H1 (cell line): ENCODE measurements at regions of chr10 and their contacts with region 1.

Region 1: DNA sequence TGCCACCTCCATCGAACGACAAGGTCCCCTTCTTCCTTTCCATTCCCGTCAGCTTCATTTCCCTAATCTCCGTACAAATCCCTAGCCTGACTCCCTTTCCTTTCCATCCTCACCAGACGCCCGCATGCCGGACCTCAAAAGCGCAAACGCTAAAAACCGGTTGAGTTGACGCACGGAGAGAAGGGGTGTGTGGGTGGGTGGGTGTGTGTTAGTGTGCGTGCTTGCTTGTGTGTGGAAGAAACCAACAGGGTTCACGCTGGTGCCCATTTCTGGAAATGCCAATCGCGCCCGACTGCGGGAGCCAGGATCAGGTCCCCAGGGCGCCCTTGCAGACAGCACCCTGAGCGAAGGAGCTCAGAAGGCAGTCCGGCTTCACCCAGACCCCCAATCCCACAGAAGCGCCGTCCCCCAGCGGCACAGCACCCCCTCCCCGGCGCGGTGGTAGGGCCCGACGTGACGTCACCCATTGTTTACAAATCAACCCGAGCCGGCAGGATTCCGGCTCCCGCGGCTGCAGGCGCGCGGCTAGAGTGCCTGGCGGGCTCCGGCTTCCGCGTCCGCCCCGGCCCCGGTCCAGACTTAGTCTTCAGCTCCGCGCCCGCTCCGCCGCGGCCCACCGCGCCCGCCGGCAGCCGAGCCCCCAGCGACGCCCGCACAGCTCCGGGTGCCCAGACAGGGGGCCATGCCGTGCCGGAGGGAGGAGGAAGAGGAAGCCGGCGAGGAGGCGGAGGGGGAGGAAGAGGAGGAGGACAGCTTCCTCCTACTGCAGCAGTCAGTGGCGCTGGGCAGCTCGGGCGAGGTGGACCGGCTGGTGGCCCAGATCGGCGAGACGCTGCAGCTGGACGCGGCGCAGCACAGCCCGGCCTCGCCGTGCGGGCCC is at the start of gene FRAT1:
- DNase-seq: peak; percentile 65 to 95
- H3K4me3 ChIP-seq: peak within 1 kb of the TSS; percentile 45 to 79 (median 70)
- H3K27ac ChIP-seq: peak within 1 kb of the TSS; percentile 100
- H3K4me1 ChIP-seq: peaks cover 0 to 15% (median 12%) of the 10 kb centered on the region in 4 experiments; a peak in 6 of 7 replicates
- H3K27me3 ChIP-seq: peaks cover 6 to 23% (median 20%) of the 10 kb centered on the region in 4 experiments
- CTCF ChIP-seq: no peak
- EP300 ChIP-seq: peak in 1 of 2 experiments; percentile 97; a peak in 2 of 3 replicates
- POLR2A ChIP-seq: peak in 1 of 2 experiments; percentile 50; a peak in 1 of 3 replicates
- RAD21 ChIP-seq: no peak
- total RNA-seq, gene FRAT1: 4.8 and 5.2 TPM in 2 replicates

Region 2: GRCh38 chr10:97185326-97186058 is 133.5 kb before region 1 on chr10 and contains the start of gene SLIT1:
- CTCF ChIA-PET with region 1: no interaction called
- POLR2A ChIA-PET with region 1: no interaction called
- DNase-seq: peak in 1 of 2 experiments; percentile 75
- H3K4me3 ChIP-seq: peak within 1 kb of the TSS; percentile 44 to 70 (median 62)
- H3K27ac ChIP-seq: no peak within 1 kb of the TSS
- H3K4me1 ChIP-seq: peaks cover 0 to 22% (median 11%) of the 10 kb centered on the region in 4 experiments; a peak in 6 of 7 replicates
- H3K27me3 ChIP-seq: peaks cover 27 to 60% (median 51%) of the 10 kb centered on the region in 4 experiments
- CTCF ChIP-seq: no peak
- EP300 ChIP-seq: no peak
- POLR2A ChIP-seq: no peak
- RAD21 ChIP-seq: no peak
- total RNA-seq, gene SLIT1: 0.88 and 1.2 TPM in 2 replicates

Region 3: DNA sequence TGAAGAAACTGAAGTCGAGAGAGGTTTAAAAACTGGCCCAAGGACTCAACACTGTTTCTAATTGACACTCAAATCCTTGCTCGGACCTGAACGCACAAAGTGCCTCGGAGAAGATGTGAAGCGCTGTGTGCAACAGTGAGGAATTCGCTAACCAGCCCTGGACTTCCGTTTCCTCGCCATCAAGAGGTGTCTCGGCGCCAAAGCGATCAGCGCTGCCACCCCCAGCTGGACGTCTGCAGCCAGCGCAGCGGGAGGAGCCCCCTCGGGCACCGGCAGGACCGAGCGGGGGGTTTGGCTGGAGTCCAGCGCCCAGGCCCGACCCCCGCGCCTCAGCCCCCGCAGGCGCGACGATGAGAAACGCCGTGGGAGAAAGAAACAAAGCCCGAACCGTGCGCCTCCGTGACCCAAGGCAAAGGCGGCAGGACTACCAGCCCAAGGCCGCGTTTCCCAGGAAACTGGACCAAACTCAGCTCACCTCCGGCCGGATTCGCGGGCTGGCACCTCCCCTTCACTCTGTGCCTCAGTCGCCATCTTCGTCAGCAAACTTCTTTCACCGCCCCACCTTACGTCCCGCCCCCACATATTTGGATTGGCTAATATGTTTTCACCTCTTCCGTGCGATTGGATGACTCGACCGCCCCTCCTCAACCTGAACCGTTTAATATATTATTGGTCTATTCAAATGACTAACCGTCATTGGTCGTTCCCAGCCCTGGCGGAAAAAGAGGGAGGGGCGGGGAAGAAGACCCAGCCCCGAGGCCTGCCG is 26.7 kb before region 1 on chr10 and contains the start of gene ARHGAP19:
- CTCF ChIA-PET with region 1: no interaction called
- POLR2A ChIA-PET with region 1: interaction called, 15 read pairs
- DNase-seq: peak; percentile 92 to 93
- H3K4me3 ChIP-seq: peak within 1 kb of the TSS; percentile 64 to 89 (median 84)
- H3K27ac ChIP-seq: peak within 1 kb of the TSS; percentile 93
- H3K4me1 ChIP-seq: peaks cover 0 to 4% (median under 1%) of the 10 kb centered on the region in 4 experiments; a peak in 3 of 7 replicates
- H3K27me3 ChIP-seq: no peaks in the 10 kb centered on the region
- CTCF ChIP-seq: 0 out of 4 replicates have a peak, but pooled peaks of 1 of the 3 experiments have one; percentile 6
- EP300 ChIP-seq: no peak
- POLR2A ChIP-seq: peak; percentile 81 to 95
- RAD21 ChIP-seq: no peak; a peak in 1 of 4 replicates
- total RNA-seq, gene ARHGAP19: 32.1 and 33.4 TPM in 2 replicates

Region 4: DNA sequence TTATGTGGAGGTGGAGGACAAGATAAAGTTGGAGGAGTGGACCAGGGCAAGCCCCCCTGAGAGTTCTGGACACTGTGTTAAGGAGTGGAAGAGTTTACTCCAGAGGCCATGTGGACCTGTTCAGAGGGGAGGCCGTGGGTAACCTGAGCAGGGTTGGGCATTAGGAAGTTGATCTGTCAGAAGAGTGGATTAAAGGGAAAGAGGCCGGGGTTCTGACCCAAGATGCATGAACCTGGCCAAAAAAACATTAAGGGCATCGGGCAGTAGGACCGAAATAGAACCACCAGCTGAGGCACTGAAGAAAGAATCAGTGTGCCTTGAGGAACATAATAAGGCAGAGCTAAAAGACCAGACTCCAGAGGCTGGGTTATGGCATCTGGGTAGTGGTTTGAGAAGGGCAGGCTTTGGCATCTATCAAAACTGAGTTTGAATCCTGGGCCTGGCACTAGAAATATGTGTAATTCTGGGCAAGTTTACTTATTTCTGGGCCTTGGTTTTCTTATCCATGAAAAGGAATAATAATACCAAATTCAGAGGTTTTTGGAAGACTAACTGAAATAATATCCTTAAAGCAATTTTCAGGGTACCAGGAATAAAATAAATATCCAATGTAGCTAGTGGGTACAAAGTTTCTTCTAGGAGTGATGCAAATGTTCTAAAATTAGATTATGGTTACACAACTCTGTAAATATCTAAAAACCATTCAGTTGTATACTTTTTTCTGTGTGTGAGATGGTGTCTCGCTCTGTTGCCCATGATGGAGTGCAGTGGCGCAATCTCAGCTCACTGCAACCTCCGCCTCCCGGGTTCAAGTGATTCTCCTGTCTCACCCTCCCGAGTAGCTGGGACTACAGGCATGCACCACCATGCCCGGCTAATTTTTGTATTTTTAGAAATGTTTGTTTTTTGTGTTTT is 10.9 kb before region 1 on chr10:
- CTCF ChIA-PET with region 1: interaction called, 6 read pairs
- POLR2A ChIA-PET with region 1: interaction called, 14 read pairs
- DNase-seq: no peak
- H3K4me3 ChIP-seq: no peak overlapping the region
- H3K27ac ChIP-seq: no peak overlapping the region
- H3K4me1 ChIP-seq: no peaks in the 10 kb centered on the region
- H3K27me3 ChIP-seq: no peaks in the 10 kb centered on the region; a peak in 1 of 7 replicates
- CTCF ChIP-seq: no peak
- EP300 ChIP-seq: no peak
- POLR2A ChIP-seq: no peak
- RAD21 ChIP-seq: no peak